ENCODE measurements at regions of chr22 and their contacts with region 1.

Region 1: DNA sequence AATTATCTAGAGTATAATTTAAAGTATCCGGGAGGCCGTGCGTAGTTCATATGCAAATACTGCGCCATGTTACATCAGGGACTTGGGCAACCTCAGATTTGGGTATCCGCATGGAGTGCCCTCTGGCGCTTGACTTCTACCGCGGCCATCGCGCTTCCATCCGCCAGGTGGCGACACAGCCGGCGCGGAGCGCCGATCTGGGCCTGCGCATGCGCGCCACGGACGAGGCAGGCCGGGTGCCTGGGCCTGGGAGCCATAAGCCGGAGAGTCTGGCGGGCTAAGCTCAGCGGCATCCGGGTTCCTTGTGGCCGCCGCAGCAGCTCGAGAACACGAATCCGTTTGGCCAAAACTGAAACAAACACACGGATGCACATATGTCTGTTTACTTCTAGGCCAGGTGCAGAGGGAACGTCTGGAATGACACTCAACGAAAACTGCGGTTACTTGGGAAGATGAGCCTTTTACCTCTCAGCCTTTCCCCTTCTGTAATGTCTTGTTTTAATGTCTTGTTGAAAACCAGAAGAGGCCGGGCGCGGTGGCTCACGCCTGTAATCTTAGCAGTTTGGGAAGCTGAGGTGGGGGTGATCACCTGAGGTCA is 21.9 kb downstream of the SNU13 start:
- DNase-seq: peak; percentile 99

Region 2: DNA sequence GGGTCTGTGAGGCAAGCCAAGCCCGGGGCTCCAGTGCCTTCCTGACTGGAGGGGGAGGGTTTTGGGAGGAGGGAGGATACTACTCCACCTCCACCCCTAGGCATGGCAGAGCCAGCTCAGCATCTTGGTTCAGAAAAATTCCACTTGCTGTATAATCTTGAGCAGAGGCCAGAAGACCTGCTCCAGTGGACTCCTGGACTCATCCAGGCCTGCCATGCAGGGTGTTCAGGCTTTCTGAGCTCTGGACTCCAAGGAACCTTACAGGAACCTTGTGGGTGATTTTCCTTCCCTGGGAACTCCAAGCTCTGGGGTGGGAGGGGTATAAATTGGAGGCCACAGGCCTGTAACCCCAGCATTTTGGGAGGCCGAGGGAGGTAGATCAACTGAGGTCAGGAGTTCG is 96.5 kb before region 1 on chr22:
- CTCF ChIA-PET with region 1: no interaction called
- POLR2A ChIA-PET with region 1: no interaction called
- DNase-seq: no peak

Region 3: GRCh38 chr22:41656556-41656955 is 10.2 kb before region 1 on chr22:
- CTCF ChIA-PET with region 1: interaction called, 7 read pairs
- POLR2A ChIA-PET with region 1: interaction called, 11 read pairs
- DNase-seq: no peak

Region 4: GRCh38 chr22:41682033-41682807 is 15.5 kb after region 1 on chr22:
- CTCF ChIA-PET with region 1: interaction called, 4 read pairs
- POLR2A ChIA-PET with region 1: interaction called, 39 read pairs
- DNase-seq: no peak

Region 5: DNA sequence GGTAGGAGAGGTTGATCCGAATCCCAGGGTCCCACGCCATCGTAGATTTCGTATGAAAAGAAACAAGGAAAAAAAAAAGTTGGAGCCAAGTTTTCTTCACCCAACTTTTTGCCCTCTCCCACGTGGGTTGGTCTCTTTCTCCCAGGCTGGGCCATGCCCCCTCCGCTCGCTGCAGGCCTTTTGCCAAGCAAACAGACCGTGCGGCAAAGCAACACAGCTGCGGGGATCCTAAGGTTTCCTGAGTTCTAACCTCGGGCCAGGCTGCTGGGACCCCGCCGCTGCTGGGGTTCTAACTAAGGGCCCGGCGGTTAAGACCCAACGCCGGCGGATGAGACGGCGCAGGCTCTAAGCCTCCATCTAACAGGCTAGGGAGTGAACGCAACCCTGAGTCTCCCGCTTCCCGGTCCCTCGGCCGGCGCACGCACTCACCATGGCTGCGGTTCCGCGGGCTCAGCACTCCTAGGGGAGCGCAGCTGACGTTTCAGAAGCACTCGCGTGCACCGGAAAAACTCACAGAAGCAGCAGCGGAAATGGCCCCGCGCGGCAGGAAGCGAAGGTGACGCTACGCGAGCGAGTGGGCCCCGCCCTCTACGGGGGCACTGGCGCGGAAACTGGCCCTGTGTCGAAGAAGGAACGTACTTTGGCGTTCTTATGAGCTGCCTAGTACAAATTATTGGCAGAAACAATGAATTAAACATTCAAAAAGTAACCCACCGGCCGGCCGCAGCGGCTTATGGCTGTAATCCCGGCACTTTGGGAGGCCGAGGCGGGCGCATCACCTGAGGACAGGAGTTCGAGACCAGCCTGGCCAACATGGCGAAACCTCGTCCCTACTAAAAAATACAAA is 21.8 kb after region 1 on chr22 and contains the start of gene SNU13:
- CTCF ChIA-PET with region 1: no interaction called
- POLR2A ChIA-PET with region 1: interaction called, 39 read pairs
- DNase-seq: peak; percentile 89

Measured in HEK293T (cell line).